ENCODE measurements at regions of chr15 and their contacts with region 1.

Region 1: DNA sequence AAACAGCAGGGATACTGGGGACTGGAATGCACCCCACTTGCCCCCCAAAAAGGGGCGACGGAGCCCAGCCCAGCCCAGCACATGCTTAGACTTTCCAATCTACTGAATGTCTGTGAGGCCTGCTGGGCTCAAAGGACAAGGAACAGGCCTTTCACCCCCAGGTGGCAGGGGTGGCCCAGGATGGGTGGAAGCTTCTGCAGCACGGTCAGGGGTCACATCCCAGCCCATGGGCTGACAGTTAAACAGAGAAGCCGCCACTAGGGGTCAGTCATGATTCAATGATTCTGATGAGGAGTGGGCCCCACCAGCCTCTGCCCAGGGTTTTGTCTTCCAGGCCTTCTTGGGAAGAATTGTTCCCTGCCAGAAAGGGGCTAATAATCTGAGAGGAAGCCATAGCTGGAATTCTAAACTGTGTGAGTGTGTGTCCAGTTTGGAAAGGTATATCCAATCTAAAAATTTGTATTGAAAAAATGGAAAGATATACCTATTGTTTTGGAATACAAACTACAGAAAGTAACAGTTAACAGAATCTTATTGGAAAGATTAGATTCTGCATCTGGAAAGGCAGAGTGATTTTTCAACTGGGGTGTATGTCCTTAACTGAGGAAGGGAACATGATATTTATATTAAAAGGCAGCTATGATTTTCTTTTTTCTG is 2.2 kb downstream of the CHRNB4 start:
- DNase-seq: peak; percentile 85

Region 2: GRCh38 chr15:78212546-78213424 is 426.0 kb before region 1 on chr15:
- CTCF ChIA-PET with region 1: no interaction called
- POLR2A ChIA-PET with region 1: no interaction called
- DNase-seq: peak; percentile 62

Region 3: DNA sequence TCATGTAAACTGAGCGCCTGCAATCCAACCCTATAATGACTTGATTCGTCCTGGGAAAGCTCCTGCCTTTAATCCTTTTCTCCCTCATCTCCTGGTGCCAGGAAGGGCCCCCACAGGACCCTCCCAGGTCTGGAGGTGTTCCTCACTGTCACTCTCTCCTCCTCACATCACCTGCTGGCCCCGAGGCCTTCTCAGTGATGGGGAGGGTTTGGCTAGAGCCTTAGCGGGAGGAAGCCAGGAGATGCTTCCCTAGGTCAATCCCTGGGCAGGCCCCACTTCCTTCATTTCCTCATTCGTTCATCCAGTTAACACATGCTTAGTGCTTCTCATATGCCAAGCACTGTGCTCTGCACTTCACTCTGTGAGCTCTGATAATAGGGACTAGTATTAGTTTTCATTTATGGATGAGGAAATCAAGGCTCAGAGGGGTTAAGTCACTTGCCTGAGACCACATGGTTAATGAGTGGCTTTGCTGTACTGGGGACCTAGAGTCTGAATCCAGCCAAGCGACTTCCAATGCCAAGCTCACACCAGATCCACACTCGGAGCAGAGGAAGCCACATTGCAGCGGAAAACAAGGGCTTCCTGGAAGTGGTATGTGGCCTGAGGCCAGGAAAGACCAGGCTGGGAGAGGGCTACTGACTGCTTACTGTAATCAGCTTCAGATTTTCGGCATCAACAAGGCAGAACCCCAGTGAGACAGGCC is 52.5 kb after region 1 on chr15:
- CTCF ChIA-PET with region 1: interaction called, 14 read pairs
- POLR2A ChIA-PET with region 1: no interaction called
- DNase-seq: no peak

Region 4: DNA sequence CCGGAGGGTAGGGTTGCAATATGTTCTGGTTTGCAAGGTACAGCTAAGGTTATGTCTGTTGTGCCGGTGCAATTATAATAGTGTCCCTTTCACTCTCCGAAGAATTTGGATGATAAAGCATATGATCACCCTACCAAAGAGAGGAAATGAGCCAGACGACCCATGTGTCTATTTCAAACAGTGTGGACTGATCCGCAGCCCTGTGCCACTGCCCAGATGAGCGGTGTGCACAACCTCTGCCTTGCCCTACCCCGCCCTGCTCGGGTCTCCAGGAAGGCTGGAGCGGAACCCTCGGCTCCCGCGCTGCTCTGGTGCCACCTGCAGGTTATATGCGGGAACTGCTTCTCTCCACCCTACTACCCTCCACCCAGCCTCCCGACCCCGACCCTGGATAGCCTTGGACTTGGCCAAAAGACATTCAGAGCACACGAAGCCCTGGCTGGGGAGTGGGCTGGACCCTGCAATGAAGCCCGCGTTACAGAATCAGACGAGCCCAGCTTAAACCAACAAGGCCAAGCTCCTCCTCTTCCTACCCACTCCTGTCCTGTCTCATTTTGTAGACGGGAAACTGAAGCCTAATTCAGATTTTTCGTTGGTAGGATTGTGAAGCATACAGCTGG is 70.6 kb after region 1 on chr15:
- CTCF ChIA-PET with region 1: interaction called, 29 read pairs
- POLR2A ChIA-PET with region 1: no interaction called
- DNase-seq: peak; percentile 86

Region 5: GRCh38 chr15:78726870-78727551 is 88.2 kb after region 1 on chr15:
- CTCF ChIA-PET with region 1: no interaction called
- POLR2A ChIA-PET with region 1: no interaction called
- DNase-seq: peak; percentile 83

Region 6: GRCh38 chr15:78750566-78750965 is 111.8 kb after region 1 on chr15:
- CTCF ChIA-PET with region 1: interaction called, 11 read pairs
- POLR2A ChIA-PET with region 1: no interaction called
- DNase-seq: no peak

Region 7: DNA sequence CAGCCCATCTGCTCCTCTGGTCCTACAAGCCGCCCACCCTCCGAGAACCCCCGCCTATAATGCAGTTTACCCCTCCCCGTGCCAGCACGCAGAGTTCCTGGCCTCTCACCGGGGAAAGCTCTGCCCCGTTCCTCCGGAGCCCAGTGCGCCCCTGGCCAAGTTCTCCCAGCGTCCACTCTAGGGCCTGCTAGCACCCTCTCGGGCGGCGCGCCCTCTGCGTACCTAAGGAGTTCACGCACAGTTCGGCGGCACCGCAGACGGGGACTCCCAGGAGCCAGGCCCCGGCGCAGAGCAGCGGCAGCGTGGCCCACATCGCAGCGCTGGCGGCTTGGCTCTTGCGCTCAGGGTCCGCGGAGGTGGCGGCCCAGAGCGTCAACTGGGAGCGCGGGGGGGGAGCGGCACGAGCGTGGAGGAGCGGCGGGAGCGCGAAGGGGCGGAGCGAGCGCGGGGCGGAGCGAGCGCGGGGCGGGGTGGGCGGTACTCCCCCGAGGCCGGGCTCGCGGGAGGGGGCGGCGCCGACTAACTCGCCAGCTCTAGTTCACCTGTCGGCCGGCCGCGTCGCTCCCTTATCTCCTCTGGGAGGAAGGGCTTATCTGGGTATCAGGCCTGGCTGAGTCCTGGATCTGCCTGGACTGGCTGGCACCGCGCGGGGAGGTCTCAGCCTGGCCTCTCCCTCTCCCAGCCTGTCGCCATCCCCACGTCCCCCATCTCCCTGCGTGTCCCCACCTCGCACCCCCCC is 306.1 kb after region 1 on chr15 and contains the start of gene CTSH:
- CTCF ChIA-PET with region 1: no interaction called
- POLR2A ChIA-PET with region 1: no interaction called
- DNase-seq: peak; percentile 91

Measured in HEK293T (cell line).